CD4-positive, alpha-beta T cell (primary cell): ENCODE measurements at regions of chr22 and their contacts with region 1.

Region 1: GRCh38 chr22:37166675-37167066 is 17.0 kb upstream of the IL2RB start:
- DNase-seq: peak; percentile 68 to 91 (median 82)
- ATAC-seq: peak; percentile 59
- H3K4me3 ChIP-seq: peak overlapping the region; percentile 53
- H3K4me3 Mint-ChIP-seq: peak overlapping the region; percentile 69
- H3K27ac ChIP-seq: no peak overlapping the region
- H3K27ac Mint-ChIP-seq: peak overlapping the region; percentile 51
- H3K4me1 ChIP-seq: peaks cover 91% of the 10 kb centered on the region
- H3K4me1 Mint-ChIP-seq: peaks cover 82% of the 10 kb centered on the region
- H3K27me3 ChIP-seq: no peaks in the 10 kb centered on the region
- H3K27me3 Mint-ChIP-seq: no peaks in the 10 kb centered on the region
- CTCF ChIP-seq: peak; percentile 88

Region 2: GRCh38 chr22:37121887-37122591 is 44.6 kb before region 1 on chr22:
- CTCF ChIA-PET with region 1: interaction called, 10 read pairs
- POLR2A ChIA-PET with region 1: interaction called, 24 read pairs
- intact Hi-C with region 1: loop called (anchors 1 to 5 kb)
- DNase-seq: peak; percentile 78 to 99 (median 88)
- ATAC-seq: peak; percentile 95
- H3K4me3 ChIP-seq: peak overlapping the region; percentile 30
- H3K4me3 Mint-ChIP-seq: peak overlapping the region; percentile 84
- H3K27ac ChIP-seq: peak overlapping the region; percentile 96
- H3K27ac Mint-ChIP-seq: peak overlapping the region; percentile 95
- H3K4me1 ChIP-seq: peaks cover 61% of the 10 kb centered on the region
- H3K4me1 Mint-ChIP-seq: peaks cover 52% of the 10 kb centered on the region
- H3K27me3 ChIP-seq: no peaks in the 10 kb centered on the region
- H3K27me3 Mint-ChIP-seq: no peaks in the 10 kb centered on the region
- CTCF ChIP-seq: peak; percentile 35

Region 3: DNA sequence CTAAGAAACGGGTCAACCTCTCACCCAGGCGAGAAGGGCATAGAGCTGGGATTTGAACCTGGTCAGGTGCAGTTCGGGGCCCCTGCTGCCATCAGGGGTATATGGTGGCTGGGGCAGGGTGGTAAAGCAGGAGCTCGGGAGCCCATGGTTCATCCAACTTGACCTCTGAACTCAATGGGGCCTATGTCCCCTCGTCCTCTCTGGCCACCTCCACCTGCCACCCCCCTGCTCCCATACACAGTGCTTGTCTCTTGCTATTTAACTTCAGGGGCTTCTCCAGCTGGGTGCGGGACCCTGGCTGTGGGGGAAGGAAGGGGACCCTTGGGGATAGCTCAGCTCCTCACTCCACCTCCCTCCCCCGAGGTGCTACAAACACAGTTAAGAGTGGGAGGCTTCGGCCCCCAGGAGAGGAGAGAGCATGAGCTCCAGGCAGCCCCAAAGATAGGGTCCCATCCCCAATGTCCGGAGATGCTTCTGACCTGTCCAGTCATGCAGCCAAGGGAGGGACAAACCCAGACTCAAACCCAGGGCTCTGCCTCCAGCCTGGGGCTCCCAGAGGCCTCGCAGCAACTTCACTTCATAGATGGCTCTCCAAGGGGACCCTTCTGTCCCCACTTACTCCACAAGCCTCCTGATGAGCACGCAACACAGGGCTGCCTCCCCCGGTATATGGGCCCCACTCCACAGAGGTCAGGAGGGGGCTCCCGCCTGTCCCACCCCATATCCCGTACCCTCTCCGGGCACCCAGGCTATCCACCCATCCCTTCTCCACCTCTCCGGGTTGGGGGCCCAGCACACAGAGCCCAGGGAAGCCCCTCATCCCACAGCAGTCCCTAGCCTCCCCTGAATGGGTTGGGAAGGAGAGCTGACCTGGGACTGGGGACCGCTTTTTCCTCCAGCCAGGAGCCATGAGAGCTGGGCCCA is 17.7 kb before region 1 on chr22:
- CTCF ChIA-PET with region 1: interaction called, 13 read pairs
- POLR2A ChIA-PET with region 1: interaction called, 62 read pairs
- intact Hi-C with region 1: no loop called
- DNase-seq: peak in 1 of 14 experiments; percentile 35
- ATAC-seq: no peak
- H3K4me3 ChIP-seq: peak overlapping the region; percentile 78
- H3K4me3 Mint-ChIP-seq: peak overlapping the region; percentile 93
- H3K27ac ChIP-seq: peak overlapping the region; percentile 61 to 82
- H3K27ac Mint-ChIP-seq: peak overlapping the region; percentile 97
- H3K4me1 ChIP-seq: peaks cover 63% of the 10 kb centered on the region
- H3K4me1 Mint-ChIP-seq: peaks cover 76% of the 10 kb centered on the region
- H3K27me3 ChIP-seq: no peaks in the 10 kb centered on the region
- H3K27me3 Mint-ChIP-seq: no peaks in the 10 kb centered on the region
- CTCF ChIP-seq: no peak

Region 4: GRCh38 chr22:37193629-37194191 is 27.0 kb after region 1 on chr22:
- CTCF ChIA-PET with region 1: interaction called, 29 read pairs
- POLR2A ChIA-PET with region 1: interaction called, 17 read pairs
- intact Hi-C with region 1: loop called (anchors 1 kb)
- DNase-seq: peak in 4 of 14 experiments; percentile 47 to 81 (median 70)
- ATAC-seq: peak; percentile 60
- H3K4me3 ChIP-seq: peak overlapping the region; percentile 18
- H3K4me3 Mint-ChIP-seq: peak overlapping the region; percentile 9
- H3K27ac ChIP-seq: peak overlapping the region; percentile 46 to 47
- H3K27ac Mint-ChIP-seq: peak overlapping the region; percentile 100
- H3K4me1 ChIP-seq: peaks cover 53% of the 10 kb centered on the region
- H3K4me1 Mint-ChIP-seq: peaks cover 60% of the 10 kb centered on the region
- H3K27me3 ChIP-seq: no peaks in the 10 kb centered on the region
- H3K27me3 Mint-ChIP-seq: no peaks in the 10 kb centered on the region
- CTCF ChIP-seq: no peak

Region 5: GRCh38 chr22:37457093-37457893 is 290.6 kb after region 1 on chr22:
- CTCF ChIA-PET with region 1: no interaction called
- POLR2A ChIA-PET with region 1: no interaction called
- intact Hi-C with region 1: loop called (anchors 2 to 5 kb)
- DNase-seq: peak; percentile 74 to 90 (median 85)
- ATAC-seq: peak; percentile 98
- H3K4me3 ChIP-seq: no peak overlapping the region
- H3K4me3 Mint-ChIP-seq: no peak overlapping the region
- H3K27ac ChIP-seq: no peak overlapping the region
- H3K27ac Mint-ChIP-seq: no peak overlapping the region
- H3K4me1 ChIP-seq: peaks cover 5% of the 10 kb centered on the region
- H3K4me1 Mint-ChIP-seq: peaks cover 6% of the 10 kb centered on the region
- H3K27me3 ChIP-seq: no peaks in the 10 kb centered on the region
- H3K27me3 Mint-ChIP-seq: no peaks in the 10 kb centered on the region
- CTCF ChIP-seq: peak; percentile 92